Caco-2 (cell line): ENCODE measurements at regions of chr2 and their contacts with region 1.

Region 1: DNA sequence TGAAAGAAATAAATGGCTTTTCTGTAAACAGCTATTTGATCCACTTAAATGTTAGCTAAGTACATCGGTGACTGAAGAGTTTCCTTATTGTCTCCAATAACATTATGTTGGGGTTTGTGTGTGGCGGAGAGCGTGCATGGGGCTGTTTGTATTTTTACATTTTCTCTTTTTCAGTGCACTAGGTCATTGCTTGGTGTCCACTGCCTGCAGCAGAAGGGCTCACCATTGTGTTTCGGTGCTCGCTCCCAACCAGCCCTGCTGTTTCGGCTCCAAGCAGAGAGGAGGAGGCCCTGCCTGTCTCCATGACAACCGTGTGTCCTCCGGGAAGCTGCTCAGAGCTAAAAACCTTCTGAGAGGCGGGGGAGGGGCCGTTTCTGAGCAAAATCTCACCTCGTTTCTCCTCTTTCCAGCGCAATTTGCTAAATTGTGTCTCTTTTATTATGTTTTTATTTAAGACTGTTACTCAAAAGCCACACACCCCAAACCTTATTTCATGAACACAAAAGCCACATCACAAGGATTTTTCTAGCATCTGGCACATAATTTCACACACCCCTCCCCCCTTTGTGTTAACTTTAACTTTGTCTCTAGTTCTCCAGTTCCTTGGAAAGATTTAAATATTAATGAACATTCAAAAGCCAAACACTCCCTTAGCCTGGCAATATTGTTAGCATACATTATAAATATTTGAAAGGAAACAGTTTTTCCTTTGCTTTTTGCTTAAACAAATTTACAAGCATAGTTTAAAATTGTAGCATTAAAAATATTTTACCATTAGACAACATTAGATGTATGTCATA is 112.8 kb upstream of the SLC38A11 start:
- DNase-seq: peak; percentile 74 to 84
- H3K4me3 ChIP-seq: no peak overlapping the region
- H3K4me3 Mint-ChIP-seq: peak overlapping the region; percentile 43
- H3K27ac Mint-ChIP-seq: peak overlapping the region; percentile 51
- H3K4me1 ChIP-seq: peaks cover 21% of the 10 kb centered on the region
- H3K4me1 Mint-ChIP-seq: peaks cover 21% of the 10 kb centered on the region
- H3K27me3 ChIP-seq: no peaks in the 10 kb centered on the region
- H3K27me3 Mint-ChIP-seq: no peaks in the 10 kb centered on the region
- CTCF ChIP-seq: no peak

Region 2: DNA sequence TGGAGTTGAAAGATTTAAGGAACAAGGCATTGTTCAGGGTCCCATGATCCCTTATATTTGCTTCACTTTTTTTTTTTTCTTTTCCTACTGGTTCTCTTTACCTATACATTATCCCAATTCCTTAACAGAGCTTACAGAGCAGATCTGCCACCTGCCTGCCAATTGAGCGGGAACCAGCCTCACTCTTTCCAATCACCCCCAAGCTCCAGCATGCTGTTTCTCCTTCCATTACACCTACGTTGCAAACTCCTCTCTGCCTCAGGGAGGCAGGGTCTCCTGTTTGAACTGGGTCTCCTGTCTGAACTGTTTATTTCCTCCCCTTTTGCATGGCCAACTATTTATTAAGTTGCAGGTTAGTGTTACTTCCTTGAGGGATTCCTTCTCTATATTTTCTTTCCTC is 35.6 kb before region 1 on chr2:
- CTCF ChIA-PET with region 1: no interaction called
- POLR2A ChIA-PET with region 1: no interaction called
- intact Hi-C with region 1: no loop called
- DNase-seq: no peak
- H3K4me3 ChIP-seq: no peak overlapping the region
- H3K4me3 Mint-ChIP-seq: no peak overlapping the region
- H3K27ac Mint-ChIP-seq: no peak overlapping the region
- H3K4me1 ChIP-seq: no peaks in the 10 kb centered on the region
- H3K4me1 Mint-ChIP-seq: peaks cover 7% of the 10 kb centered on the region
- H3K27me3 ChIP-seq: no peaks in the 10 kb centered on the region
- H3K27me3 Mint-ChIP-seq: no peaks in the 10 kb centered on the region
- CTCF ChIP-seq: no peak

Region 3: DNA sequence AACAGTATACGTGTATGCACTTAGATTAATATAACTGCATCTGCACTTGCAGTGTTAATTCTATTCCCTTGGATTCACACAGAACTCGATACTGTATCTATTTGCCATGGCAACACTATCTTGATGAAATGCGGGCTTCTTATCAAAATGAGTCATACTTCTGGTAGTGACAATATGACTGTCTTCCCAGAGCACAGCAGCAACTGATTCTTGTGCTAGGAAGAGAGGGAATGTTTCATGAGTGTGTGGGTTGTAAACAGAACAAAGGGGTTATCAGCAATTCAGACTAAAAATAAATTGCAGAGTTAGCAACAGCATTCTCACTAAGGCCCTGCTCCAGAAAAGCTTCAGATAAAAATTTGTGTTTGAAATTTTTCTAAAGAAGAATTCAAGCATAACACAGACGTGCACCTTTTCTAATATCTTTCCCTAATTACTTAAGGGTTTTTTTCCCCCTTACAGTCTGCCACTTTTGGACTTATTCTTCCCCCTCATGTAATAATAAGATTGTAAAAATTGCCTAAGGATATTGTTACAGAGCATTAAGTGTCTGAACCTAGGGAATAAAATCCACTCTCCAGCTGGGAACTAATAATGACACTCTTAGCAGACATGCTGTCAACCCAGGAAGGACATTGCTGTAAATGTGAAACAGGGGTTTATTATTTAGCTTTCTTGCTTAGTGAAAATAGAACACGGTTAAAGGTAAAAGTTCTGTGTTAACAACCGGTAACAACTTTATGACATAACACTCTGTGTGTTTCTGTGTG is 12.9 kb before region 1 on chr2:
- CTCF ChIA-PET with region 1: no interaction called
- POLR2A ChIA-PET with region 1: no interaction called
- intact Hi-C with region 1: loop called (anchors 1 kb)
- DNase-seq: peak in 1 of 2 experiments; percentile 39
- H3K4me3 ChIP-seq: no peak overlapping the region
- H3K4me3 Mint-ChIP-seq: no peak overlapping the region
- H3K27ac Mint-ChIP-seq: peak overlapping the region; percentile 65
- H3K4me1 ChIP-seq: peaks cover 16% of the 10 kb centered on the region
- H3K4me1 Mint-ChIP-seq: peaks cover 16% of the 10 kb centered on the region
- H3K27me3 ChIP-seq: no peaks in the 10 kb centered on the region
- H3K27me3 Mint-ChIP-seq: no peaks in the 10 kb centered on the region
- CTCF ChIP-seq: no peak